Activated naive CD4-positive, alpha-beta T cell treated with anti-CD3 and anti-CD28 coated beads, Interleukin-2, amount 10 ng/mL, durations not matched to agents 7 days and 5 days (primary cell): ENCODE measurements at regions of chr16 and their contacts with region 1.

Region 1: GRCh38 chr16:66961065-66961744 is at the start of gene CES3:
- DNase-seq: peak; percentile 83
- H3K4me3 Mint-ChIP-seq: peak within 1 kb of the TSS; percentile 52
- H3K27ac Mint-ChIP-seq: peak within 1 kb of the TSS; percentile 86
- H3K4me1 Mint-ChIP-seq: peaks cover 42% of the 10 kb centered on the region
- H3K27me3 Mint-ChIP-seq: peaks cover 47% of the 10 kb centered on the region

Region 2: GRCh38 chr16:66774981-66775380 is 186.2 kb before region 1 on chr16:
- CTCF ChIA-PET with region 1: no interaction called
- DNase-seq: no peak
- H3K4me3 Mint-ChIP-seq: no peak overlapping the region
- H3K27ac Mint-ChIP-seq: no peak overlapping the region
- H3K4me1 Mint-ChIP-seq: no peaks in the 10 kb centered on the region
- H3K27me3 Mint-ChIP-seq: no peaks in the 10 kb centered on the region

Region 3: GRCh38 chr16:66948134-66948836 is 12.9 kb before region 1 on chr16:
- CTCF ChIA-PET with region 1: interaction called, 10 read pairs
- DNase-seq: peak; percentile 32
- H3K4me3 Mint-ChIP-seq: peak overlapping the region; percentile 79
- H3K27ac Mint-ChIP-seq: no peak overlapping the region
- H3K4me1 Mint-ChIP-seq: peaks cover 20% of the 10 kb centered on the region
- H3K27me3 Mint-ChIP-seq: peaks cover 60% of the 10 kb centered on the region

Region 4: GRCh38 chr16:67183627-67184328 is 222.6 kb after region 1 on chr16 and contains the start of gene MATCAP1:
- CTCF ChIA-PET with region 1: interaction called, 10 read pairs
- DNase-seq: peak; percentile 98
- H3K4me3 Mint-ChIP-seq: no peak within 1 kb of the TSS
- H3K27ac Mint-ChIP-seq: no peak within 1 kb of the TSS
- H3K4me1 Mint-ChIP-seq: peaks cover 25% of the 10 kb centered on the region
- H3K27me3 Mint-ChIP-seq: peaks cover 39% of the 10 kb centered on the region